ENCODE measurements at regions of chr6 and their contacts with region 1.

Region 1: GRCh38 chr6:10201606-10202539 is 213.0 kb downstream of the TFAP2A start:
- DNase-seq: peak; percentile 41
- H3K4me3 Mint-ChIP-seq: no peak overlapping the region
- H3K27ac Mint-ChIP-seq: peak overlapping the region; percentile 59
- H3K4me1 Mint-ChIP-seq: peaks cover 23% of the 10 kb centered on the region
- H3K27me3 Mint-ChIP-seq: no peaks in the 10 kb centered on the region
- CTCF ChIP-seq: no peak

Region 2: GRCh38 chr6:10190042-10190441 is 11.8 kb before region 1 on chr6:
- CTCF ChIA-PET with region 1: interaction called, 4 read pairs
- POLR2A ChIA-PET with region 1: interaction called, 12 read pairs
- intact Hi-C with region 1: no loop called
- DNase-seq: no peak
- H3K4me3 Mint-ChIP-seq: no peak overlapping the region
- H3K27ac Mint-ChIP-seq: no peak overlapping the region
- H3K4me1 Mint-ChIP-seq: peaks cover 14% of the 10 kb centered on the region
- H3K27me3 Mint-ChIP-seq: no peaks in the 10 kb centered on the region
- CTCF ChIP-seq: no peak

Region 3: DNA sequence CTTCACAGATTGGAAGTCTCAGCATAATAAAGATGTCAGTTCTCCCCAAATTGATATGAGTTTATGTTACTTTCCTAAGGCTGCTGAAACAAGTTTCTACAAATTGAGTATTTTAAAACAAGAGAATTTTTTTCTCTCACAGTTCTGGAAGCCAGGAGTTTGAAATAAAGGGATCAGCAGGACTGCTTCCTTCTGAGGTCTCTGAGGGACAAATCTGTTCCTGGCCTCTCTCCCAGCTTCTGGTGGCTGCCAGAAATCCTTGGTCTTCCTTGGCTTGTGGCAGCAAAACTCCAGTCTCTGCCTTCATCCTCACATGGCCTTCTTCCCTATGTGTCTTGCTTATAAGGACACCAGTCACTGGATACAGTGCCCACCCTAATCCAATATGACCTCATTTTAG is 76.9 kb after region 1 on chr6:
- CTCF ChIA-PET with region 1: no interaction called
- POLR2A ChIA-PET with region 1: no interaction called
- intact Hi-C with region 1: no loop called
- DNase-seq: no peak
- H3K4me3 Mint-ChIP-seq: no peak overlapping the region
- H3K27ac Mint-ChIP-seq: no peak overlapping the region
- H3K4me1 Mint-ChIP-seq: peaks cover 7% of the 10 kb centered on the region
- H3K27me3 Mint-ChIP-seq: no peaks in the 10 kb centered on the region
- CTCF ChIP-seq: no peak

Region 4: GRCh38 chr6:10873313-10873712 is 671.4 kb after region 1 on chr6:
- CTCF ChIA-PET with region 1: no interaction called
- POLR2A ChIA-PET with region 1: no interaction called
- intact Hi-C with region 1: no loop called
- DNase-seq: peak; percentile 1
- H3K4me3 Mint-ChIP-seq: no peak overlapping the region
- H3K27ac Mint-ChIP-seq: no peak overlapping the region
- H3K4me1 Mint-ChIP-seq: no peaks in the 10 kb centered on the region
- H3K27me3 Mint-ChIP-seq: no peaks in the 10 kb centered on the region
- CTCF ChIP-seq: no peak